ENCODE measurements at regions of chr20 and their contacts with region 1.

Region 1: DNA sequence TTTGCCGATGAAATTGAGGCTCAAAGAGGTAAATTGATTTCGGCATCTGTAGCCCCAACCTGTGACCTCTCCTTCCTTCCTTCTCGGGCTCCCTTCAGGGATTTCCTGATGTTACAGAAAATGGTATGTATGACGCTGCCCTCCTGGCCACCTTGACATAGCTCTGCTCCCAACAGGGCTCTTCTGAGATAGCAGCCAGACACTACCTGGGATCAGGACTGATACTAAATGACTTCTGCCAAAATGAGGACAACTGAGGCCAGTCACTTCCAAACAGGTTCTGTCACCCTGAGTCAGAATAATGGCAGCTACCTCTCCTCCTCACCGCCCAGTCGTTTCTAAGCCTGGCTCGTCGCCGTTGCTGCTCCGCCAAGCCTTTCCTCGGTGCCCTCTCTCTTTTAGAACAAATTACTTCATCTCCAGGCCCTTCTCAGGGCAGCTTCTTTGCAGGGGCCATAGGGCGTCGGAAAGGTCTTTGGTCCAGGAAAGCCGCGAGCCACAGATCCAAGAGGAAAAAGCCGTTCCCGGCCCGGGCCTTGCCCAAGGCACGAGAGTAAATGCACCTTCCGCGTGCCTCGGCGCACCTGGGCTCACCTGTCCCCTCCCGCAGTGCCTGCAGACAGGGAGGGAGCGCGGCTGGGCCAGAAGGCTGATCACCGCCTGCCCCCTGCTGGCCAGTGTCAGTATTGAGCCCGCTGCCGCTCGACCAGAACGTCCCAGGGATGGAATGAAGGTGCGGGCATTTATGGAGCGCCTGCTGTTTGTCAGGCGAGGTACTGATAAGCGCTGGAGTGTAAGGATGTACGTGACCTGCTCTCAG is 904 bp upstream of the LPIN3 start:
- DNase-seq: peak; percentile 73 to 91 (median 83)
- ATAC-seq: peak; percentile 95
- H3K4me3 ChIP-seq: peak overlapping the region; percentile 31
- H3K4me3 Mint-ChIP-seq: peak overlapping the region; percentile 84
- H3K27ac ChIP-seq: no peak overlapping the region
- H3K27ac Mint-ChIP-seq: peak overlapping the region; percentile 10
- H3K4me1 ChIP-seq: peaks cover 14% of the 10 kb centered on the region
- H3K4me1 Mint-ChIP-seq: peaks cover 11% of the 10 kb centered on the region
- H3K27me3 ChIP-seq: no peaks in the 10 kb centered on the region
- H3K27me3 Mint-ChIP-seq: peaks cover 7% of the 10 kb centered on the region
- CTCF ChIP-seq: peak; percentile 100

Region 2: GRCh38 chr20:40970201-40970600 is 369.5 kb before region 1 on chr20:
- CTCF ChIA-PET with region 1: no interaction called
- POLR2A ChIA-PET with region 1: no interaction called
- intact Hi-C with region 1: loop called (anchors 1 to 2 kb)
- DNase-seq: no peak
- ATAC-seq: no peak
- H3K4me3 ChIP-seq: no peak overlapping the region
- H3K4me3 Mint-ChIP-seq: no peak overlapping the region
- H3K27ac ChIP-seq: no peak overlapping the region
- H3K27ac Mint-ChIP-seq: no peak overlapping the region
- H3K4me1 ChIP-seq: peaks cover 9% of the 10 kb centered on the region
- H3K4me1 Mint-ChIP-seq: peaks cover 11% of the 10 kb centered on the region
- H3K27me3 ChIP-seq: no peaks in the 10 kb centered on the region
- H3K27me3 Mint-ChIP-seq: peaks cover 7% of the 10 kb centered on the region
- CTCF ChIP-seq: no peak

Region 3: GRCh38 chr20:41173161-41173721 is 166.5 kb before region 1 on chr20:
- CTCF ChIA-PET with region 1: interaction called, 12 read pairs
- POLR2A ChIA-PET with region 1: no interaction called
- intact Hi-C with region 1: loop called (anchors 1 kb)
- DNase-seq: peak; percentile 49 to 81 (median 62)
- ATAC-seq: peak; percentile 89
- H3K4me3 ChIP-seq: no peak overlapping the region
- H3K4me3 Mint-ChIP-seq: no peak overlapping the region
- H3K27ac ChIP-seq: no peak overlapping the region
- H3K27ac Mint-ChIP-seq: peak overlapping the region; percentile 67
- H3K4me1 ChIP-seq: peaks cover 17% of the 10 kb centered on the region
- H3K4me1 Mint-ChIP-seq: peaks cover 15% of the 10 kb centered on the region
- H3K27me3 ChIP-seq: no peaks in the 10 kb centered on the region
- H3K27me3 Mint-ChIP-seq: no peaks in the 10 kb centered on the region
- CTCF ChIP-seq: peak; percentile 92

Region 4: GRCh38 chr20:41232973-41233926 is 106.5 kb before region 1 on chr20:
- CTCF ChIA-PET with region 1: interaction called, 3 read pairs
- POLR2A ChIA-PET with region 1: no interaction called
- intact Hi-C with region 1: loop called (anchors 2 to 10 kb)
- DNase-seq: no peak
- ATAC-seq: no peak
- H3K4me3 ChIP-seq: no peak overlapping the region
- H3K4me3 Mint-ChIP-seq: no peak overlapping the region
- H3K27ac ChIP-seq: no peak overlapping the region
- H3K27ac Mint-ChIP-seq: no peak overlapping the region
- H3K4me1 ChIP-seq: peaks cover 11% of the 10 kb centered on the region
- H3K4me1 Mint-ChIP-seq: peaks cover 26% of the 10 kb centered on the region
- H3K27me3 ChIP-seq: no peaks in the 10 kb centered on the region
- H3K27me3 Mint-ChIP-seq: no peaks in the 10 kb centered on the region
- CTCF ChIP-seq: no peak

Region 5: DNA sequence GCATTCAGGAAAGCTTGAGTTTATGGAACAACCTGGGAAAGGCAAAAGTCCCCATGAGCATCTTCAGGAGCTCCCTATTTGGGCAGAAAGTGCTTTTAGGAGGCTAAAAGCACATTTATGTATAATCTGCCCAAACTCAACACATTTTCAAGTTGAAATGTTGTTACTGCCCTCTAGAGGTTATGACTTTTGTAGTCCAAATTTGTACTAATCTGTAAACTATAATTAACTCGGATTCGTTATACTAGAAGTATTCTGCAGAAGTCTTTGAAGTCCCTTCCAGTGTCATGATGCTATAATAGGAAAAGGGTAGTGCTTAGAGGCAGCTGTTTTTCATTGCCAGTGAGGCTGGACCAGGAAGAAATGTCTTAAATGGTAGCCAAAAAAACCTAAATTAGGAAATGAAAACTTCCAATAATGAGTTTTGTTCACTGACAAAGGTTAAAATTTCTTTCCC is 71.7 kb after region 1 on chr20:
- CTCF ChIA-PET with region 1: no interaction called
- POLR2A ChIA-PET with region 1: no interaction called
- intact Hi-C with region 1: loop called in 1 of 2 experiments (anchors 5 kb)
- DNase-seq: no peak
- ATAC-seq: peak; percentile 41
- H3K4me3 ChIP-seq: no peak overlapping the region
- H3K4me3 Mint-ChIP-seq: no peak overlapping the region
- H3K27ac ChIP-seq: no peak overlapping the region
- H3K27ac Mint-ChIP-seq: peak overlapping the region; percentile 26
- H3K4me1 ChIP-seq: peaks cover 14% of the 10 kb centered on the region
- H3K4me1 Mint-ChIP-seq: peaks cover 51% of the 10 kb centered on the region
- H3K27me3 ChIP-seq: no peaks in the 10 kb centered on the region
- H3K27me3 Mint-ChIP-seq: no peaks in the 10 kb centered on the region
- CTCF ChIP-seq: peak; percentile 50

Measured in CD4-positive, alpha-beta T cell (primary cell).